Activated naive CD4-positive, alpha-beta T cell treated with anti-CD3 and anti-CD28 coated beads for 36 hours (primary cell): ENCODE measurements at regions of chr5 and their contacts with region 1.

Region 1: GRCh38 chr5:174951146-174951780 is 226.9 kb downstream of the MSX2 start:
- DNase-seq: peak; percentile 76
- H3K4me3 Mint-ChIP-seq: no peak overlapping the region
- H3K27ac Mint-ChIP-seq: no peak overlapping the region
- H3K4me1 Mint-ChIP-seq: no peaks in the 10 kb centered on the region
- H3K27me3 Mint-ChIP-seq: peaks cover 6% of the 10 kb centered on the region

Region 2: DNA sequence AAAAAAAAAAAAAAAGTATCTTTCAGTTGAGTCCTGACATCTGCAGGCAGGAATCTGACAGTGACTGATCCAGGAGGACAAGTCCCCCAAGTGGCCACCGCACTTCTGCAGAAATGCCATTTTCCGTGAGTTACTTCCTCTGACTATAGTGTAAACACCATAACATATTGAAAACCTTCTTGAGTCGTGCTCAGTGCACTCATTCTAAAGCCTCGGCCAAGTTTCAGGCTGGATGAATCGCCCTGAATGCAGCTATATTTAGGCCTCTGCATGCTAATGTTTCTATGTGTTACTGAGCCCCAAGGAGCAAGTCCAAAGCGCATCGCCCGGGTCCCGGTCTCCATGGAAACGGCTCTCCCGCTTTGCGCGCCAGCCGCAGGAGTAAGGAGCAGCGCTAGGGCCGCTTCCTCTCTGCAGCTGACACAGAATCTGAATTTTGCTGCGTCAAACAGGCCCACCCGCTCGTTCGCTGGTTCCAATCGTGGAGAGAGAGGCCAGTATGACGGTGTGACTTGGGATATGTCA is 108.5 kb after region 1 on chr5:
- CTCF ChIA-PET with region 1: no interaction called
- intact Hi-C with region 1: loop called (anchors 1 kb)
- DNase-seq: peak; percentile 60
- H3K4me3 Mint-ChIP-seq: peak overlapping the region; percentile 65
- H3K27ac Mint-ChIP-seq: peak overlapping the region; percentile 44
- H3K4me1 Mint-ChIP-seq: peaks cover 12% of the 10 kb centered on the region
- H3K27me3 Mint-ChIP-seq: no peaks in the 10 kb centered on the region

Region 3: DNA sequence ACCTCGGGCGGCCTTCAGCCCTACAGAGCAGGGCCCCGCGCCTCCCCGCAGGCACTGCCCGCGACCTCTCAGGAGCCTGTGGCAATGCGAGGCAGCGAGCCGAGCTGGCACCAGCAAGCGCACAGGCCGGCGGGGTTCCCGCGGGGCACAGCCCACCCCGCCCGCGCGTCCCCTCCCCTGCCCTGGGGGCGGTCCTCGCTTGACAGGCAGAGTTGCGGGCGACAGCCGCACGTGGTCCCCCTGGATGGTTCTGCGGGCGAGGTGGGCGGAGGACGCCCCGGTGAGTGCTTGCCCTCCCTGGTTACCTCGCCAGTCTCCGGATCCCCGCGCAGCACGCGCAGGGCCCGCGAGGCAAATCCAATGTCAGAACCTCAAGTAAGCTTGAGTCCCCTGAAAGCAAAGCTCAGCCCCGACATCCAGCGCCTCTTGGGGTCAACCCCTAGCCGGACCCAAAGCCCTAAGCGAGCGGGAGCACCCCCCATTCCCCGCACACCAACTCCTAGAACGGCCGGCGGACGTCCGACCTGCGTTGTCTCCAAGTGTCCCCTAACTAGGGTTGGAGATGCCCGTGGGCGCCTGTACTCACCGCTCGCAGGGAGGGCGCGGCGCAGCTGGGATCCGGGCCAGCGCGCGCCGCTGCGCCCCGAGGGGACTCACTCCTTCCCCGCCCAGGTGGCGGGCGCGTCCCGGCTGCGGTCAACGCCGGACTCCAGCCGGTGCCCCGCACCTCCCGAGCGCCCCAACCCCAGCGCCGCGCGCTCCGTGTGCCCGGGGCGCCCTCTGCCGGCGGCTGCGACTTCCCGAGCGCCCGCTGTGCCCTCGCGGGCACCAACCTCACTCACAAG is 493.0 kb after region 1 on chr5 and contains the start of gene DRD1:
- CTCF ChIA-PET with region 1: interaction called, 7 read pairs
- intact Hi-C with region 1: loop called (anchors 1 kb)
- DNase-seq: peak; percentile 52
- H3K4me3 Mint-ChIP-seq: peak within 1 kb of the TSS; percentile 57
- H3K27ac Mint-ChIP-seq: no peak within 1 kb of the TSS
- H3K4me1 Mint-ChIP-seq: peaks cover 8% of the 10 kb centered on the region
- H3K27me3 Mint-ChIP-seq: peaks cover 40% of the 10 kb centered on the region
- total RNA-seq, gene DRD1: not detected

Region 4: GRCh38 chr5:175464074-175464941 is 513.0 kb after region 1 on chr5:
- CTCF ChIA-PET with region 1: interaction called, 5 read pairs
- intact Hi-C with region 1: loop called (anchors 1 kb)
- DNase-seq: peak; percentile 90
- H3K4me3 Mint-ChIP-seq: no peak overlapping the region
- H3K27ac Mint-ChIP-seq: no peak overlapping the region
- H3K4me1 Mint-ChIP-seq: peaks cover 16% of the 10 kb centered on the region
- H3K27me3 Mint-ChIP-seq: no peaks in the 10 kb centered on the region

Region 5: GRCh38 chr5:175718401-175719108 is 767.3 kb after region 1 on chr5:
- CTCF ChIA-PET with region 1: no interaction called
- intact Hi-C with region 1: loop called (anchors 1 kb)
- DNase-seq: peak; percentile 86
- H3K4me3 Mint-ChIP-seq: no peak overlapping the region
- H3K27ac Mint-ChIP-seq: no peak overlapping the region
- H3K4me1 Mint-ChIP-seq: peaks cover 6% of the 10 kb centered on the region
- H3K27me3 Mint-ChIP-seq: no peaks in the 10 kb centered on the region